HEK293 (cell line): ENCODE measurements at regions of chr17 and their contacts with region 1.

Region 1: DNA sequence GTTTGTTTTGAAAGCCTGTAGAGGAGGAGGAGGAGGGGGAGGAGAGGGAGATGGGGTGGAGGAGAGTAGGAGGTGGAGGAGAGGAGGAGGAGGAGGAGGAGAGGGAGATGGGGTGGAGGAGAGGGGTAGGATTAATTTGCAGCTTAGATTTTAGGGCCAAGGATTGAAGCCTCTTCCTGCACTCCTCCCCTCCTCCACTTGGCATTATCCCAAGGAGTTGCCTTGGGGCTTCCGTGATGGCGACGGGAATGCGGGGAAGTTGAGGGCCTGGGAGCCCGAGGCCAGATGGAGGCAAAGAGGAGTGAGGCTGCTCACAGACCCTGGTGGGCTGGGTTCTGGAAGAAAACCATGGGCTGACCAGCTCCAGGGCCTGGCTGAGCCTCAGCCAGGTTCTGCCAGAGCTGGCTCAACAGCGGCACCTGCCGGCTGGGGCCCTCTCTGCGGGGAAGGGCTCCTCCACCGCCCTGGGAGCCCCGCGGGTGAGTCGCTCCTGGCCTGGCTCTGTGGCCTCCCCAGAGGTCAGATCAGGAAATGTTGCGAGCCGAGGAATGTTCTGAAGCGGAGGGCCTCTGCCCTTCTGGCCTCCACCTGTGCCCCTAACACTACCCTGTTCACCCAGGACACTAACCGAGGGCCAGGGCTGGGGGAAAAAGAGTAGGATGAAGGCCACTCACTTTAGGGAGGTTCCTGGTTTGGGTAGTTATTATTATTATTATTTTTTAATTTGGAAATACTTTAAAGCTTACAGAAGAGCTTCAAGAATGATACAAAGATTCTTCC is 23.9 kb upstream of the FMNL1 start:
- H3K4me3 ChIP-seq: no peak overlapping the region
- H3K27ac ChIP-seq: peak overlapping the region; percentile 34
- H3K4me1 ChIP-seq: peaks cover 6% of the 10 kb centered on the region
- CTCF ChIP-seq: peak; percentile 99

Region 2: DNA sequence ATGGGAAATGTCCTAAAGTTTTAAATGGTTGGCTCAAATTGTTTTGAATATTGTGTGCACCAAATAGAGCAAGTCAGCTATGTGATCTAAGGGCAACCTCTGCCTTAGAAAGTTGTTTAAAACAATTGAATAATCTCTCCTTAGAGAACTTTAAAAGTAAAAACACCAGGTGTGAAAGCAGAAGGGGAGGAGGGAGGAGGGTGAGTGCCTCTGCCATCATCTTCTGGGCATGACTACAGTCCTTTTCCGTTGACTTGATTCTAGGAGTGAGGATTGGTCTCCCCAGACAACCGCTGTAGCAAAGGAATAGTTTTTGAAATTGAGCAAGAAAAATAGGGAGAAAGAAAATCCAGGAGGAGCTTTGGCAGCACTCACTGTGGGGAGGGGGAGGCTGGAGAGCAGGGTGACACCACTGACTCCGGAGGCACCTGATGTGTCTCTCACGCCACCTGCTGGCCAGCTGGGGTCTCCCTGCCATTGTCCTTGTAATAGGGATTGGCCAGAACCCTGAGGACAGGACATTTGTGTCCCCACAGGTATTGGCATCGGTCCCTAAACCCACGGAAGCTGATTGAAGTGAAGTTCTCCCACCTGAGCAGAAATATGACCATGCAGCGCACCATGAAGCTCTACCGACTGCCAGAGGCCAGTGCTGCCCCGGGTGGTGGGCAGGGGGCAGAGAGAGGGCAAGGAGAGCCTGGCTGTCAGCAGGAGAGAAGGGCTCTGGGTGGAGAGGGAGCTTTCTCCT is 98.7 kb before region 1 on chr17:
- CTCF ChIA-PET with region 1: interaction called, 24 read pairs
- POLR2A ChIA-PET with region 1: no interaction called
- H3K4me3 ChIP-seq: no peak overlapping the region
- H3K27ac ChIP-seq: no peak overlapping the region
- H3K4me1 ChIP-seq: no peaks in the 10 kb centered on the region
- CTCF ChIP-seq: peak; percentile 88

Region 3: GRCh38 chr17:45129426-45129939 is 68.3 kb before region 1 on chr17:
- CTCF ChIA-PET with region 1: interaction called, 301 read pairs
- POLR2A ChIA-PET with region 1: no interaction called
- H3K4me3 ChIP-seq: no peak overlapping the region
- H3K27ac ChIP-seq: no peak overlapping the region
- H3K4me1 ChIP-seq: peaks cover 3% of the 10 kb centered on the region
- CTCF ChIP-seq: no peak

Region 4: DNA sequence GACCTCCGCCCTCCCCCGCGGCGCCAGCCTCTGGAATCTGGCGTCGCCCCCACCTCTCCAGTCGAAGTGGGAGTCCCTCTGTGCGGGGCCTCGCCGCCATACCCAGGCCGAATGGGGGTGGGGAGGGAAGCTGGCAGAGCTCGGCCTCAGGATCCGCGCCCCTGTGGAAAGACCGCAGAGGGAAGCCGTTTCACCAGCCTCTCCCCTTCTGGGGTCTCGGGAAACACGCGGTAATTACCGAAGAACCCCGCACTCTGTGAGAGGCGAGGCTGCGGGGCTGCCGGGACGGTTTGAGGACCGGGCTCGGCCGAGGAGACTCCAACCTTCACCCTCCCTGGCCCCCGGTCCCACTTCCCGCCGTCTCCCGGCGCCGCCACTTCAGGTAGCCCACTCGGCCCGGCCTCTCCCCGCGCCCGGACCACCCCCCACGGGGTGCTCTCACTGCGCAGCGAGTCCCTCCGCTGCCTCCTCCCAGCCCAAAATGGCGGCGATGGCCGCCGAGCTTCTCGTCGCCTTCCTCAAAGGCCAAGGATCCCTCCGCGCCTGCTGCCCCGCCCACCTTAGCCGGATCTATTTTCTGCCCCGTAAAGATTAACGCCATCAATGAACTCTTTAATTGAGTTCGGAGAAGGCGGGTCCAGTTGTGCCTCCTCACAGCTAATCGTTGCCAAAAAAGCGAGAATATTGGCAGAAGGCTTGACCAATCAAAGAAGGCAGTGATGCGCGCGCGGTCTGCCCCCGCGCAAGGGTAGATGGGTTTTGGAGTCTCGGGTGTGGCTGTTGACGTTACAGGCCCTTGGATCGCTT is 36.5 kb before region 1 on chr17:
- CTCF ChIA-PET with region 1: interaction called, 81 read pairs
- POLR2A ChIA-PET with region 1: interaction called, 27 read pairs
- H3K4me3 ChIP-seq: peak overlapping the region; percentile 97
- H3K27ac ChIP-seq: peak overlapping the region; percentile 92
- H3K4me1 ChIP-seq: peaks cover 15% of the 10 kb centered on the region
- CTCF ChIP-seq: no peak

Region 5: DNA sequence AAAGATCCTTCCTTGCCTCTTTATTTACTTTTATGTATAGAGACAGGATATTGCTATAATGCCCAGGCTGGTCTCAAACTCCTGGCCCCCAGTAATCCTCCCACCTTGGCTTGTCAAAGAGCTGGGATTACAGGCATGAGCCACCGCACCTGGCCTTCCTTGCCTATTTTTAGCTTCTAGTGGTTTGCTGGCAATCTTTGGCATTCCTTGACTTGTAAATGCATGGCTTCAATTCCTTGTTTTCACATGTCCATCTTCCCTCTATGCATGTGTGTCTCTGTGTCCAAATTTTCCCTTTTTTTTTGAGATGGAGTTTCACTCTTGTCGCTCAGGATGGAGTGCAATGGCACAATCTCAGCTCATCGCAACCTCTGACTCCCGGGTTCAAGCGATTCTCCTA is 13.6 kb before region 1 on chr17:
- CTCF ChIA-PET with region 1: interaction called, 27 read pairs
- POLR2A ChIA-PET with region 1: no interaction called
- H3K4me3 ChIP-seq: no peak overlapping the region
- H3K27ac ChIP-seq: no peak overlapping the region
- H3K4me1 ChIP-seq: no peaks in the 10 kb centered on the region
- CTCF ChIP-seq: no peak

Region 6: GRCh38 chr17:45228763-45229539 is 31.2 kb after region 1 on chr17:
- CTCF ChIA-PET with region 1: interaction called, 25 read pairs
- POLR2A ChIA-PET with region 1: no interaction called
- H3K4me3 ChIP-seq: no peak overlapping the region
- H3K27ac ChIP-seq: no peak overlapping the region
- H3K4me1 ChIP-seq: no peaks in the 10 kb centered on the region; the same call in 1 of the 2 replicates
- CTCF ChIP-seq: no peak

Region 7: DNA sequence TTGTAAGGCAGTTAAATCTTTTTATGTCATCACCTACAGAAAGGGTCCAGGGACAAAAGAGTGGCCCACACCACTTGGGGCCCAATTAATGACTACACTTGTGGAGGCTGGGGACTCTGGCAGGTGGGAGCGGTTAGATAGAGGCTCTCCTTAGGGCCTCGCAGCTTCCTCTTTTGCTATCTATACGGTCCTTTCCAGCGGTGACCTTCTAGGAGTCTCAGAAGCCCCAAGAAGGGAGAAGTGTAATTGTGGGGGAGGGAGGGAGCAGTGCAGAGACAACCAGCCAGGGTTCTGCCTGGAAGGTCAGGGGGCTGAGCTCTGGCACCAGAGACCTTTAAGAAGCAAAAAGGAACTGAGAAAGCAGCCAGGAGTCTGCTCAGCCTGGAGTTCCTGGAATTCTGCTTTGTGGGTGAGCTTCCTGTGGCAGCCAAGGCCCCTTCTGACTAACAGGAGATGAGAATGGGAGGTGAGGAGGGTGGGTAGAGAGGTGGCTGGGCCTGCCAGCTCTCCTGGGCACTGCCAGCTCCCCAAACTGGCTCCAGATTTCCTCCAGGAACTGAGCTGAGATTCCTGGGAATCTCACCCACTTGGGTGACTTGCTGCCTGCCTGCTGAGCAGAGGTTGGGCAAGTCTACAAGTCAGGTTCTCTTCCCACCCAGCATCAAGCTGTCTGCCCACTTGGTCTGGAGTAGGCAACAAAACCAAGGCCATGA is 135.4 kb after region 1 on chr17:
- CTCF ChIA-PET with region 1: no interaction called
- POLR2A ChIA-PET with region 1: no interaction called
- H3K4me3 ChIP-seq: no peak overlapping the region
- H3K27ac ChIP-seq: no peak overlapping the region
- H3K4me1 ChIP-seq: peaks cover 18% of the 10 kb centered on the region
- CTCF ChIP-seq: no peak